ENCODE measurements at regions of chr2 and their contacts with region 1.

Region 1: GRCh38 chr2:38115216-38116032 is 39.5 kb upstream of the CYP1B1 start:
- DNase-seq: peak; percentile 59
- ATAC-seq: peak; percentile 97
- H3K4me3 ChIP-seq: no peak overlapping the region
- H3K27ac ChIP-seq: no peak overlapping the region
- H3K4me1 ChIP-seq: no peaks in the 10 kb centered on the region
- H3K27me3 ChIP-seq: no peaks in the 10 kb centered on the region
- CTCF ChIP-seq: peak; percentile 84 to 99 (median 97)
- POLR2A ChIP-seq: no peak
- RAD21 ChIP-seq: peak; percentile 84

Region 2: GRCh38 chr2:37600735-37601134 is 514.7 kb before region 1 on chr2:
- CTCF ChIA-PET with region 1: no interaction called
- POLR2A ChIA-PET with region 1: no interaction called
- RAD21 ChIA-PET with region 1: no interaction called
- intact Hi-C with region 1: no loop called
- DNase-seq: no peak
- ATAC-seq: no peak
- H3K4me3 ChIP-seq: no peak overlapping the region
- H3K27ac ChIP-seq: no peak overlapping the region
- H3K4me1 ChIP-seq: peaks cover 0 to 3% of the 10 kb centered on the region in 2 experiments; a peak in 1 of 4 replicates
- H3K27me3 ChIP-seq: no peaks in the 10 kb centered on the region
- CTCF ChIP-seq: no peak
- POLR2A ChIP-seq: no peak
- RAD21 ChIP-seq: no peak

Region 3: DNA sequence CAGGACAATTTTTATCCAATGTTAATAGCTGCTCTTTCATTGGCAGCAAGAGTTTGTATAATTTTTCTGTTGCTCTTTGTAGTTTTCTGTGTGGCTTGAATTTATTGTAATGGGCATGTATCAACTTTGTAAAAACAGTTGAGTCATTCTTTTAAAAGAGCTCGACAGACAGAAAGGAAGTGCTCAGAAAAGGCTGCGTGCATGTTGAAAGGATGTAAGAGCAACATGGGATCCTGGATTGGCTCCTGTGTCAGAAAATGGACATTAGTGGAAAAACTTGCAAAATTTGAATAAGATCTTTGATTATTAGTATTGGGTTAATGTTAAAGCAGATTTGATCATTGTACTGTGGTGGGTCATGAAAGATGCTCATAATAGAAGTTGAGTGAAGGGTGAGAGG is 350.7 kb before region 1 on chr2:
- CTCF ChIA-PET with region 1: no interaction called
- POLR2A ChIA-PET with region 1: no interaction called
- RAD21 ChIA-PET with region 1: no interaction called
- intact Hi-C with region 1: no loop called
- DNase-seq: no peak
- ATAC-seq: no peak
- H3K4me3 ChIP-seq: no peak overlapping the region
- H3K27ac ChIP-seq: no peak overlapping the region
- H3K4me1 ChIP-seq: peaks cover 4 to 15% of the 10 kb centered on the region in 2 experiments
- H3K27me3 ChIP-seq: no peaks in the 10 kb centered on the region
- CTCF ChIP-seq: no peak
- POLR2A ChIP-seq: no peak
- RAD21 ChIP-seq: no peak

Region 4: DNA sequence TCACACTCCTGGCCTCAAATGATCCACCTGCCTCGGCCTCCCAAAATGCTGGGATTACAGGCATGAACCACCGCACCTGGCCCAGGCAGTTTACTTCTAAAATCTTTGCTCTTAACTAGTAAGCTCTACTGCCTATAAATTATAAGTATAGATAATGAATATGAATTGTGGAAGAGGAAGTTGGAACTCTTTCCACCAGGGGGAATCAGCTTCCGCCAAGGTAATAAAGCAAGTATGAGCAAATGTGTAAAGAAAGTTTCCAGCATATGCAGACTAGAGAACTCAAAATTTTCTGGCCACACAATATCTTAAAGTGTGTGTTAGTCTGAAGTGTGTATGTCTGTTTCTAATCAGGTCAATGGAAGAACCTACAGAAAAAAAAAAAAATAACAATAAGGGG is 122.3 kb before region 1 on chr2:
- CTCF ChIA-PET with region 1: interaction called, 6 read pairs
- POLR2A ChIA-PET with region 1: no interaction called
- RAD21 ChIA-PET with region 1: no interaction called
- intact Hi-C with region 1: loop called (anchors 1 kb)
- DNase-seq: no peak
- ATAC-seq: 0 out of 2 replicates have a peak, but pooled peaks have one; percentile 32
- H3K4me3 ChIP-seq: no peak overlapping the region
- H3K27ac ChIP-seq: no peak overlapping the region
- H3K4me1 ChIP-seq: no peaks in the 10 kb centered on the region
- H3K27me3 ChIP-seq: no peaks in the 10 kb centered on the region
- CTCF ChIP-seq: peak; percentile 36 to 37 (median 36); a peak in 4 of 6 replicates
- POLR2A ChIP-seq: no peak
- RAD21 ChIP-seq: peak; percentile 44

Region 5: DNA sequence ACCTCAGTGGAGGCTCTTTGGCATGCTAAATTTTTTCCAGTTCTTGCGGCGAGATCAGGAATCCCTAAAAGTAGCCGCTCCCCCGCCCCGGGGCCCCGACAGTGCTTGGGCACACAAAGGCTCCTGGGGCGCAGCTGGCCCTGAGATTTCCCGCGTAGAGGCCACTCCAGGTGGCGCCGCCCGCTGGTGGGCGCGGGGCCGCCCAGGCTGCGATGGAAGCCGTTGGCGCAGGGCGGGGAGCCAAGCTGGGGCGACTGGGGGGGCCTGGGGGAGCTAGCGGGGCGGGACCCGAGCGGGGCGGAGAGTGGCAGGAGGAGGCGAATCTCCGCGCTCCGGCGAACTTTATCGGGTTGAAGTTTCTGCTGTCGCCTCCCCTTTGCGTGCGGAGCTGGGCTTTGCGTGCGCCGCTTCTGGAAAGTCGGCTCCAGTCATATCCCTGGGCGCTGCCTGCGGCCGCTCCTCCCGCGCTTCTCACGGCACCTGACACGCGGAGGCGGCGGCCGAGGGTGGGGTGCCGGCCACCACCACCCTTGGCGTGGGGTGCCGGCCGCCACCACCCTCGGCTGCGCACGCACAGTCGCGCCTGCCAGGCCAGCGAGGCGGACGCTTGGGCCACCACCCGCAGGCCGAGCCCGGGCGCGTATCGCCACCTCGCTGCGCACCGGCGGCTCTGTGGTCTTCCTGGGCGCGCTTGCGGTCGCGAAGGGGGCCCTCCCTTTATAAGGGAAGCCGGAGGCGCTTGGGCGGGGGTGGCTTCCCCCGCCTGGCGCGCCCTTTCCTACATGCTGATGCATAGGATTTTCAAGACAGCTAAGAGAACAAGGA is 38.6 kb before region 1 on chr2:
- CTCF ChIA-PET with region 1: interaction called, 13 read pairs
- POLR2A ChIA-PET with region 1: no interaction called
- RAD21 ChIA-PET with region 1: no interaction called
- intact Hi-C with region 1: no loop called
- DNase-seq: peak; percentile 48
- ATAC-seq: peak; percentile 77
- H3K4me3 ChIP-seq: peak overlapping the region; percentile 42 to 59
- H3K27ac ChIP-seq: peak overlapping the region; percentile 73
- H3K4me1 ChIP-seq: peaks cover 5 to 28% of the 10 kb centered on the region in 2 experiments
- H3K27me3 ChIP-seq: no peaks in the 10 kb centered on the region
- CTCF ChIP-seq: peak in 2 of 3 experiments; percentile 45 to 49
- POLR2A ChIP-seq: no peak
- RAD21 ChIP-seq: no peak

Measured in HCT116 (cell line).